ENCODE measurements at regions of chr2 and their contacts with region 1.

Region 1: DNA sequence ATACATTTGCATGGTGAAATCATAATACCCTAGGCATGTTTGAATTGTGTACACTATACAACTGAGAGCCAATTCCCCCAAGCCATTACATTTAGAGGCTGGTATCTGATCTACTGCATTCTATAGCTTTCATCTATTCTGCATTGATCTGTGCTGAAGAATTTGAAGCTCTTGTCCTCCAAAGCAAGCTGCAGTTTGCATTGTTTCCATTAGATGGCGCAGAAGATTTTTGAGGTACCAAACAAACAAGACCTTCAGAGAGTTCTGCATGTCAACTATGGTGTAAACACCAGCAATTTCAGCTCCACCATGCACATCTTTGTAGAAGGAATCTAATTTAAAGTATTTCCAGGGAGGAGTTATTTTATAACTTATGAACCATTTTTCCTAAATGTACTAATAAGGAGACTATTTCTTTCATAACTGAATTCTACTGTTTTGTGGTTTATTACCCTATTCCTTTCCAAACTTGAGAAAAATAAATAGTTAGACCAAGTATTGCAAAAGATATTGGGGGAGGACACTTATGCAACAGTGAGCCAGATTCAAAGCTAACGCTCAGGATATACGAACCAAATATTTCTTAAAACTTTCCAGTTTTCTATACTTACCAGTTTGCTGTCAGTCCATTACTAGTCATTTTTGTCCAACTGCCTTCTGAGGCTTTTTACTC is 761.8 kb upstream of the ACVR2A start:
- DNase-seq: peak; percentile 61
- H3K4me3 Mint-ChIP-seq: no peak overlapping the region
- H3K27ac Mint-ChIP-seq: no peak overlapping the region
- H3K4me1 Mint-ChIP-seq: peaks cover 13% of the 10 kb centered on the region
- H3K27me3 Mint-ChIP-seq: no peaks in the 10 kb centered on the region

Region 2: DNA sequence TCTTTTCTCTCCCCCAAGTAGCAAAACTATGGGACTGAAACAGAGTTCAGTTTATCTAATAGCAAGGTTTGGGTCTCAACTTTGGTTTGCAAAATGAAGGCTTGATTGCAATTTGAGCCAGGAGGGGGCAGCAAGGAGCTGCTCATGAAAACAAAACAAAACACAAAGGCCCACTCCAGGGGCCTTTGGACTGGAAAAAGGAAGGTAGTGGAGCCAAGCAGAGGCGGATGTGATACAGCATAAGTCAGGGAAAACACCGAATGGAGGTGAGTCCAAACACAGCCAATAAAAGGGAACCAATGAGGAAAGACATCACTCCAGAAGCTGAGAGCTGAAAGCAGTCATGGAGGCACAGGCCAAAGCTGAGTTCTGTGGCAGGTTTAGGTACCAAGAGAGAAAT is 37.9 kb before region 1 on chr2:
- CTCF ChIA-PET with region 1: interaction called, 13 read pairs
- POLR2A ChIA-PET with region 1: no interaction called
- DNase-seq: peak; percentile 62
- H3K4me3 Mint-ChIP-seq: no peak overlapping the region
- H3K27ac Mint-ChIP-seq: no peak overlapping the region
- H3K4me1 Mint-ChIP-seq: peaks cover 4% of the 10 kb centered on the region
- H3K27me3 Mint-ChIP-seq: peaks cover 5% of the 10 kb centered on the region

Region 3: GRCh38 chr2:147068071-147068470 is 14.9 kb before region 1 on chr2:
- CTCF ChIA-PET with region 1: interaction called, 12 read pairs
- POLR2A ChIA-PET with region 1: no interaction called
- DNase-seq: no peak
- H3K4me3 Mint-ChIP-seq: no peak overlapping the region
- H3K27ac Mint-ChIP-seq: no peak overlapping the region
- H3K4me1 Mint-ChIP-seq: no peaks in the 10 kb centered on the region
- H3K27me3 Mint-ChIP-seq: peaks cover 3% of the 10 kb centered on the region

Region 4: DNA sequence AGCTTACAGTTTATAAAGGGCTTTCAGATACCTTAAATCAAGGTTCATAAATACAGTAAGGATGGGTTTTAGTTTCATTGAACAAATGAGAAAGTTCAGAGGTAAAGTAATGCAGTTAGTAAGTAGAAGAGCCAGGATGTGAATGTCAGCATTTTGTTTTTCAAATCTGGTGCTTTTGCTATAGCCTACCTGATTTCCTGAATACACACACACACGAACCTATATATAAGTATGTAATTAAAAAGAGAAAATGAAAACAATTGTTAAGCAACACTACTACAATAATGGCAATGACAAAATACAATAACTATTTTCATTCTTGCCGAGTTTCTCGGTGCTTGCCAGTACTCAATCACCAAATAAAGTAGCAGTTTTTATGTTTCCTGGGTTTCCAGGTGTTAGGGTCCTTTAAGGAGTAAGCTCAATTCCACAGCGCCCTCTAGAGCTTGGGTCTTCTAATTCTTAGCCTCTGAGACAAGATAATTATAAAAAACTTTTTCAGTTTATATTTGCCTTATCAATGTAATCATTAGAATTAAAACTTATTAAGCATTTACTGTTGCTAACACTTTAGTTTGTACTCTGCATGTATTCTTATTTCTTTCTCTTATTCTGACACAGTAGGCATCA is 248.9 kb after region 1 on chr2:
- CTCF ChIA-PET with region 1: interaction called, 35 read pairs
- POLR2A ChIA-PET with region 1: no interaction called
- DNase-seq: peak; percentile 59
- H3K4me3 Mint-ChIP-seq: no peak overlapping the region
- H3K27ac Mint-ChIP-seq: peak overlapping the region; percentile 47
- H3K4me1 Mint-ChIP-seq: peaks cover 38% of the 10 kb centered on the region
- H3K27me3 Mint-ChIP-seq: no peaks in the 10 kb centered on the region

Region 5: GRCh38 chr2:147910990-147911473 is 828.0 kb after region 1 on chr2:
- CTCF ChIA-PET with region 1: interaction called, 39 read pairs
- POLR2A ChIA-PET with region 1: no interaction called
- DNase-seq: peak; percentile 23
- H3K4me3 Mint-ChIP-seq: no peak overlapping the region
- H3K27ac Mint-ChIP-seq: no peak overlapping the region
- H3K4me1 Mint-ChIP-seq: peaks cover 20% of the 10 kb centered on the region
- H3K27me3 Mint-ChIP-seq: no peaks in the 10 kb centered on the region

Measured in activated CD4-positive, alpha-beta memory T cell treated with anti-CD3 and anti-CD28 coated beads, Interleukin-2, amount 10 ng/mL, durations not matched to agents 7 days and 5 days (primary cell).